WTC11 (cell line): ENCODE measurements at regions of chr17 and their contacts with region 1.

Region 1: DNA sequence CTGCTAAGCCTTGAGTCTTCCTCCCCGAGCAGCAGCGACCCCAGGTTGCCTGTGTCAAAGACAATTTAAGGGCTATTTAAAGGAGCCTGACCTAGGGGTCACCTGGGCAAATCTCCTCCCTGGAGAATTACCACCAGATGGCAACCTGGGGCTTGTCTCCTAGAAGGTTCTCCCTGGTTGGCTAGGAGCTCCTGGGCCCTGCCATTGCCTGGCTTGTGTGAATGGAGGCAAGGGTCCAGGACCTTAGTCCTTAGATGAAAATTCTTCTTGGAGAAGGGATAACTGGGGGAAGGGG is 51.3 kb upstream of the TAC4 start:
- DNase-seq: peak; percentile 69
- ATAC-seq: peak; percentile 89
- H3K4me3 Mint-ChIP-seq: no peak overlapping the region
- H3K27ac Mint-ChIP-seq: no peak overlapping the region
- H3K4me1 Mint-ChIP-seq: peaks cover 26% of the 10 kb centered on the region
- H3K27me3 Mint-ChIP-seq: peaks cover 51% of the 10 kb centered on the region
- CTCF ChIP-seq: no peak

Region 2: DNA sequence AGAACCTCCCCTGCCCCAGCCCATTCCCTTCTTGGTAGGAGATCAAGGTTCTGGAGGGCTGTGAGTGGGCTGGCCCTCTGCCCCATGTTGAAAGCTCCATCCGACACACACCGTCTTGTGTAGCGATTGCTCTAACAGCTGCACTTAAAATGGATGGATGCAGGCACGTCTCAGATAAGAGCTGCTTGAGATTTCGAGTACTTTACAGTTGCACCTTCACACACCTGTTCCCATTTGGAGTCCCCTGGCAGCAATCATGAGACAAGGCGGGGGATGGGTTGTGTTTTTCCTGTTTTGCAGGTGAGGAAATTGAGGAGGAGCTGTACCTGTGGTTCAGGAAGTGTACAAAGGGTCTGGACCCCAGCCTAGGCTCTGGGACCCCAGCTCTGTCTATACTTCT is 25.7 kb before region 1 on chr17:
- CTCF ChIA-PET with region 1: interaction called, 12 read pairs
- POLR2A ChIA-PET with region 1: no interaction called
- DNase-seq: no peak
- ATAC-seq: no peak
- H3K4me3 Mint-ChIP-seq: no peak overlapping the region
- H3K27ac Mint-ChIP-seq: peak overlapping the region; percentile 68
- H3K4me1 Mint-ChIP-seq: peaks cover 48% of the 10 kb centered on the region
- H3K27me3 Mint-ChIP-seq: no peaks in the 10 kb centered on the region; the same call in 1 of the 2 replicates
- CTCF ChIP-seq: no peak

Region 3: GRCh38 chr17:49887086-49888028 is 11.8 kb before region 1 on chr17:
- CTCF ChIA-PET with region 1: interaction called, 18 read pairs
- POLR2A ChIA-PET with region 1: no interaction called
- DNase-seq: peak; percentile 56
- ATAC-seq: peak; percentile 41
- H3K4me3 Mint-ChIP-seq: no peak overlapping the region
- H3K27ac Mint-ChIP-seq: peak overlapping the region; percentile 71; the same call in 1 of the 2 replicates
- H3K4me1 Mint-ChIP-seq: peaks cover 24% of the 10 kb centered on the region
- H3K27me3 Mint-ChIP-seq: peaks cover 34% of the 10 kb centered on the region
- CTCF ChIP-seq: no peak

Region 4: DNA sequence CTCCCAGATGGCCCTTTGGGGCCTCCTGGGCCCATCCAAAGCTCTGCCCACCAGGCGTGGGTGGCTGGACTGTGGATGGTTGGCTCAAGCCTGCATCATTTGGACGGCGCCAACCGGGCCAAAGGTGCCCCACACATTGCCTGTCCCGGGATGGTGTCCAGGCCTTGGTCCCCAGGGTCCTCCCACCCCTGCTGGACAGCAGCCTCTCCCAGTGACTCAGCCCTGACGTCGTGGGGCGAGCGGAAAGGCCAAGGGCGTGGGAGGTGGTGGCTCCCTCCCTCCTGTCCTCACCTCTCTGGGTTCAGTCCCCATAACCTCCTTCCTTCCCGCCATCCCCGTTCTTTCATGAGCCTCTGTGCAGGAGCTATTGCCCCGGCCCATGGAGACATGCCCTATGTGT is 27.7 kb after region 1 on chr17:
- CTCF ChIA-PET with region 1: interaction called, 12 read pairs
- POLR2A ChIA-PET with region 1: no interaction called
- DNase-seq: no peak
- ATAC-seq: no peak
- H3K4me3 Mint-ChIP-seq: no peak overlapping the region
- H3K27ac Mint-ChIP-seq: no peak overlapping the region
- H3K4me1 Mint-ChIP-seq: no peaks in the 10 kb centered on the region
- H3K27me3 Mint-ChIP-seq: peaks cover 2% of the 10 kb centered on the region; the same call in 1 of the 2 replicates
- CTCF ChIP-seq: no peak

Region 5: DNA sequence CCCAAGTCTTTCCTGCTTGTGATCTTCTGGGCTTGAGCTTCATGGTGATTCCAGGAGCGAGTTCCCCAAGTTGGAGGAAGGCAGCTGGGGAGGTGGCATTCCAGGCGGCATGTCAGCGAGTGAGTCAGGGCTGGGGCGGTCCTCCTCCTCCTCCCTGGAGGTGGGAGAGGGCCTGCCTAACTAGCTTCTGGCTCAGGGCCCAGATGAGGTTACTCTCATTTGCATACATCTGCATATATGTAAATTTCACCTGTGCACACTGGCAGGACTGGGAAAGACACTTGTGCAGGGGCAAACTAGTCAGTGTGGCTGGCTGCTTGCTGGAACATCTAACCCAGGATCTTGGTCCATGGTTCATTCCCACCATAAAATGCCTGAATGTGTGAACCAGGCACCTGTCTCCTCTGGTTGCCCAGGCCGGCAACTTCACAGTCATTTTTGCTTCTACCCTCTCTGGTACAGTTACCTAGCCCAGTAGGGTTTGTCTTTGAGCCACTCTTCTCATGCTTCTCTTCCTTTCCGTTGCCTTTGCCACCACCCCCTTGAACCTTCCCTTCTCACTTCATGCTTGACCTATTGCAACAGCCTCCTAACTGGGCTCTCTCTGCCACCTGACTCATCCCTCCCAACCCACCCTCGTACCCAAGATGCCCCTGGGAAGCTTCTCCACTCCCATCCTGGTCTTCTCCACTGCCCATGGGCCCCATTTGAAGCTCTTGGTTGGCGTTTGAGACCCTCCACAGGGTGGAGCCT is 60.2 kb after region 1 on chr17:
- CTCF ChIA-PET with region 1: interaction called, 14 read pairs
- POLR2A ChIA-PET with region 1: no interaction called
- DNase-seq: peak; percentile 51
- ATAC-seq: peak; percentile 43
- H3K4me3 Mint-ChIP-seq: no peak overlapping the region
- H3K27ac Mint-ChIP-seq: no peak overlapping the region
- H3K4me1 Mint-ChIP-seq: peaks cover 22% of the 10 kb centered on the region
- H3K27me3 Mint-ChIP-seq: peaks cover 75% of the 10 kb centered on the region
- CTCF ChIP-seq: no peak

Region 6: DNA sequence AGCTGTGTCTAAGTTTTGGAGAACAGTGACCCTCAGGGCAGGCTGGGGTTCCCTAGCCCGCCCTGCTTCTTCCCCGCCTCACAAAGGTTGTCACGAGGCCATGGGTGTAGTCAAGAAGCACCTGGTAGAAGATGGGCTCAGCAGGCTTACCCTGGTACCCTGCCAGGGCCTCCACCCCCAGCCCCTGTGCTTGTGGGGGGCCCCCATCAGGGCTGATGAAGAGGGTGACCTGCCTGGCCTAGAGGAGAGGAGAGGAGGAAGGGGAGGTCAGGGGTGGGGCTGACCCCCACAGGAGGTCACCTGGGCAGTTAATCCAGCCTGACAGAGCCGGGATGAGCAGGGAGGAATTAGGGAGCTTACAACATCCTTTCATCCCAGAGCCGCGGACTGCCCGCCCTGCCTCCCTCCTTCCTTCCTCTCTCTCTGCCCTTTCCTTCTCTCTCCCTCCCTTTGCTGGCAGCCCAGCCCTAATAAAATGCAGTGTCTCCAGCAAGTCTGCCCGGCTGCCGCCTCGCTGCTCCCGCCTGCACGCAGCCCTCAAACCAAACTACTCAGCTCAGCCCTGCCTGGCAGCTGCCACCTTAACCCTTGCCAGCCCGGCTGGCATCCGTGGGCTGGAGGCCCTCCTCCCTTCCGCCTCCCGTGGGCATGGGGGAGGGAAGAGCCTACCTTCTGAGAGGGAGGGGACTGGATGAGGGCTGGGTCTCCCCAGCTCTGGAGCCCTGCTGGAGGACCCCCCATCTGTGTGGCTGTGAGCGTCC is 88.7 kb after region 1 on chr17:
- CTCF ChIA-PET with region 1: interaction called, 145 read pairs
- POLR2A ChIA-PET with region 1: interaction called, 5 read pairs
- DNase-seq: no peak
- ATAC-seq: peak; percentile 48
- H3K4me3 Mint-ChIP-seq: peak overlapping the region; percentile 27; the same call in 1 of the 2 replicates
- H3K27ac Mint-ChIP-seq: no peak overlapping the region
- H3K4me1 Mint-ChIP-seq: peaks cover 21% of the 10 kb centered on the region
- H3K27me3 Mint-ChIP-seq: peaks cover 94% of the 10 kb centered on the region
- CTCF ChIP-seq: no peak